ENCODE measurements at regions of chr2 and their contacts with region 1.

Region 1: DNA sequence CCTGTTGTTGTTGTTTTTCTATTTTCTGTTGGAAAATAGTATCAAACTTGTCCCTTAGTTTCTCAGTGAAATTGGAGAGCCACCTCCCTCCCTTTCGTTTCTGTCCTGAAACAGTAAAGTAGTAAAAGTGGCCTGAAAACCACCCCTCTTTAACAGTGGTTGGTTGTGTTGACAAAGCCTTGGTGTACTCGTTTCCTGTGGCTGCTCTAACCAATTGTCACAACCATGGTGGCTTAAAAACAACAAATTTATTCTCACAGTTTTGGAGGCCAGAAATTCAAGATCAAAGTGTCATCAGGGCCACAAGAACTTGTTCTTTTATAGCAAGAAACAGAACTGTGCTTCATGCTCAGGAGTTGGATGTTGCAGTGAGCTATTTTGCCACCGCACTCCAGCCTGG is 4.0 kb upstream of the DYSF start:
- DNase-seq: no peak
- H3K4me3 ChIP-seq: no peak overlapping the region
- H3K27ac ChIP-seq: no peak overlapping the region
- H3K4me1 ChIP-seq: peaks cover 0 to 22% (median 11%) of the 10 kb centered on the region in 4 donors
- H3K27me3 ChIP-seq: peaks cover 21% of the 10 kb centered on the region
- CTCF ChIP-seq: no peak
- EP300 ChIP-seq: no peak
- POLR2A ChIP-seq: no peak

Region 2: DNA sequence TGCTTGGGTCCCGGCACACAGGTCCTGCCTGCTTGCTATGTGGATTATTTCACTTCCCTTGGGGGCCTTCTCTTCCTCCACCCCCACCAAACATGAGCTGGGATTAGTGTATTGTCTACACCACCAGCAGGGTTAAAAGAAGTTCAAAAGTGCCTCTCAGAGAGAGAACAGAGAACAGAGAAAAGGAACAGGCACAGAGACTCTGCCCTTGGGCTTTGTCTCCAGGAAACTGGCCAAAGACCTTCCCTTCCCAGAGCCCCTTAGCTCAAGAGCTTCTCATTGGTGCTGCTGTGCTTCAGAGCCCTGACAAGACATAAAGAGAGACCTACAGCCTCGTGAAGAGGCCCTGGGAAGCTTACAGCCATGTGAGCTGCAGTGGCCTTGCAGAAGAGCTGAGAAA is 651.8 kb before region 1 on chr2:
- in situ Hi-C with region 1: no loop called
- intact Hi-C with region 1: loop called (anchors 5 kb)
- DNase-seq: no peak
- H3K4me3 ChIP-seq: no peak overlapping the region
- H3K27ac ChIP-seq: no peak overlapping the region
- H3K4me1 ChIP-seq: no peaks in the 10 kb centered on the region
- H3K27me3 ChIP-seq: peaks cover 14% of the 10 kb centered on the region
- CTCF ChIP-seq: no peak
- EP300 ChIP-seq: no peak
- POLR2A ChIP-seq: no peak

Region 3: GRCh38 chr2:71428472-71429383 is 20.6 kb before region 1 on chr2:
- in situ Hi-C with region 1: no loop called
- intact Hi-C with region 1: no loop called
- DNase-seq: no peak
- H3K4me3 ChIP-seq: no peak overlapping the region
- H3K27ac ChIP-seq: no peak overlapping the region
- H3K4me1 ChIP-seq: no peaks in the 10 kb centered on the region
- H3K27me3 ChIP-seq: no peaks in the 10 kb centered on the region
- CTCF ChIP-seq: no peak
- EP300 ChIP-seq: no peak
- POLR2A ChIP-seq: no peak

Measured in transverse colon (tissue), 4 donors.